OCI-LY7 (cell line): ENCODE measurements at regions of chrX and their contacts with region 1.

Region 1: DNA sequence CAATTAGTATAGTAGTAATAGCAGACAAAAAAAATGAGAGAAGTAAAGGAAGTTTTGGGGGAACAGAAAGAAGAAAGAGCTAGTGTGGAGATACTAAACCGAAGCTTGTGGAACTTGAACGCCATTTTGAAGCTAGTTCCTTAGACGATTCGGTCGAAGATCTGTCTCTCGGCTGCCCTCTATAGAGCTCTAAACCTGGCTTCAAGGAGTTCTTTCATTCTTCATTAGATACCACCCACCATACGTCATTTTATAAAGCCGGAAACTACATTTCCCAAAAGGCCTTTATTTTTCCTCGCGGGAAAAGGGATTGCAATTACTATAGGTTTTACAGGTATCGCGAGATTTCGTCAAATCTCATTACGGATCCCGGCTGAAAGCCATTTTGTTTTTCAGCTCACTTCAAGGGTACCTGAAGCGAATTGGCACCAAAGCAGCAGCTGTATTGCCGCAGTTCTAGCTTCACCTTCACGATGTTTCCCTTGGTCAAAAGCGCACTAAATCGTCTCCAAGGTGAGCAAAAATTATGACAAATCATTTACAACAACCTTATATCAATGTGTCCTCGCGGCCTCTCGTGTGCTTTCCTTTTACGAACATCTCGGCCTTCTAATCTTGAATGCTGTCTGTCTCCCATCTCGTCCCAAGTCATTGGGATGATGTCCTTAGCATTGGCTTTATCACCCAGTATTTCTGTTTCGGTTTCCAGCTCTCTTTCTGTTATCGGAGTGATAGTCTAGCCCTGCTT is at the start of gene COX7B:
- DNase-seq: peak; percentile 96
- H3K4me3 ChIP-seq: peak within 1 kb of the TSS; percentile 91
- H3K27ac ChIP-seq: peak within 1 kb of the TSS; percentile 82
- H3K4me1 ChIP-seq: no peaks in the 10 kb centered on the region
- CTCF ChIP-seq: peak; percentile 70
- total RNA-seq, gene COX7B: 189 and 199 TPM in 2 replicates

Region 2: DNA sequence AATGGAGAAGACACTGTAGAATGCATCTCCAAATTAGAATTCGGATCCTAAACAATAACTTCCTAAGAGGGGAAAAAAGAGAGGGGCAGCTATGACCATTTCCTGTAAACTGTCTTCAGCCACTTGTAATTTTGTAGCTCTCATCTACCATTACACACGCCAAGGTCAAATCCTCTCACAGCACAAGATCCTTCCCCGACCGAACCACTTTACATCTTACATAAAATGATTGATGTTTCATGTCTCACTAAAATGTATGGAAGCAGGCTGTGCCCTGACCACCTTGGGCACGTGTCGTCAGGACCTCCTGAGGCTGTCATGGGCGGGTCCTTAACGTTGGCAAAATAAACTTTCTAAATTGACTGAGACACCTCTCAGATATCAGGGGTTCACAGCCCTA is 1750.5 kb before region 1 on chrX:
- CTCF ChIA-PET with region 1: no interaction called
- POLR2A ChIA-PET with region 1: no interaction called
- intact Hi-C with region 1: loop called (anchors 10 kb)
- DNase-seq: peak; percentile 60
- H3K4me3 ChIP-seq: peak overlapping the region; percentile 66
- H3K27ac ChIP-seq: peak overlapping the region; percentile 96
- H3K4me1 ChIP-seq: peaks cover 24% of the 10 kb centered on the region
- CTCF ChIP-seq: no peak

Region 3: GRCh38 chrX:77785486-77786364 is 113.5 kb before region 1 on chrX and contains the start of gene ATRX:
- CTCF ChIA-PET with region 1: no interaction called
- POLR2A ChIA-PET with region 1: interaction called, 5 read pairs
- intact Hi-C with region 1: loop called (anchors 10 kb)
- DNase-seq: peak; percentile 89
- H3K4me3 ChIP-seq: peak within 1 kb of the TSS; percentile 91
- H3K27ac ChIP-seq: peak within 1 kb of the TSS; percentile 81
- H3K4me1 ChIP-seq: peaks cover 16% of the 10 kb centered on the region
- CTCF ChIP-seq: no peak
- total RNA-seq, gene ATRX: 48.2 and 73.6 TPM in 2 replicates

Region 4: GRCh38 chrX:77962068-77962902 is 63.0 kb after region 1 on chrX:
- CTCF ChIA-PET with region 1: no interaction called
- POLR2A ChIA-PET with region 1: no interaction called
- intact Hi-C with region 1: no loop called
- DNase-seq: no peak
- H3K4me3 ChIP-seq: no peak overlapping the region
- H3K27ac ChIP-seq: no peak overlapping the region
- H3K4me1 ChIP-seq: no peaks in the 10 kb centered on the region
- CTCF ChIP-seq: no peak